Calu3 (cell line): ENCODE measurements at regions of chr9 and their contacts with region 1.

Region 1: GRCh38 chr9:98074115-98074990 is 17.8 kb downstream of the NANS start:
- DNase-seq: peak; percentile 74
- H3K4me3 Mint-ChIP-seq: no peak overlapping the region
- H3K27ac Mint-ChIP-seq: peak overlapping the region; percentile 24
- H3K4me1 Mint-ChIP-seq: peaks cover 24% of the 10 kb centered on the region
- H3K27me3 Mint-ChIP-seq: no peaks in the 10 kb centered on the region
- CTCF ChIP-seq: peak; percentile 82

Region 2: DNA sequence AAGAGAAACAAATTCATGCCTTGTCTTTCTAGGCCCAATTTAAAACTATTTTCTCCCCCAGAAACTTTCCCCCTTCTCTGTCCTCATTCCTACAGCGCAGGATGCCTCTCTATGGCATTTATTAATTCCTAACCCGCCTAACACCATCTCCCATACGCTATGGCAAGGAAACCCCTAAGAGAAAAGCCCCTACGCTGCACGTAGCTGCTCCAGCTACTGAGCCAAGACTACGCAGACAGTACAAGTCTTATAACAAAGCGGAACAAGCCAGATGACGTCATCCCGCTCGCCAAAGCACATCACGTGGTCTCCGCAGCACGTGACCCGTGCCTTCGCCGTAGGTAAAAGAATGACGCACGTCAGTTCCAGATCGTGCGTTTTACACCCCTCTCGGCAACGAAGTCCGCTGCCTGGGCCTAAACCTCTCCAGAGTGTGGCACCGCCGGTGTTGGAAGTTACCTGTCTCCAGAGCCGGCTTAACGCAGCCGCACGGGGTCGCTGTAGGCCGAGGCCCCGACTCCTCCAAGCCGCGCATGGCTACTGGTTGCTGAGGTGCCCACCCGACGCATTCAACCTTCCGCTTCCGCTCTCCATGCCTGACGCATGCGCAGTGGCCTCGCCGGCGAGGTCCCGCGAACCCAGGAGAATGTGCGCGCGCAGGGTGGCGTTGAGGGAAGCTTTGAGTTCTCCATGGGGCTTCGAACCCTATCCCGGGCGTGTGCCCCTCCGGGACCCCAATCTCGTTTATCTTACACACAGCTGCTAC is 152.2 kb before region 1 on chr9 and contains the start of gene TRMO:
- CTCF ChIA-PET with region 1: no interaction called
- intact Hi-C with region 1: loop called (anchors 2 kb)
- DNase-seq: peak; percentile 91
- H3K4me3 Mint-ChIP-seq: peak within 1 kb of the TSS; percentile 88
- H3K27ac Mint-ChIP-seq: peak within 1 kb of the TSS; percentile 99
- H3K4me1 Mint-ChIP-seq: peaks cover 19% of the 10 kb centered on the region
- H3K27me3 Mint-ChIP-seq: no peaks in the 10 kb centered on the region
- CTCF ChIP-seq: peak; percentile 33
- total RNA-seq, gene TRMO: 4.8 and 5.0 TPM in 2 replicates

Region 3: DNA sequence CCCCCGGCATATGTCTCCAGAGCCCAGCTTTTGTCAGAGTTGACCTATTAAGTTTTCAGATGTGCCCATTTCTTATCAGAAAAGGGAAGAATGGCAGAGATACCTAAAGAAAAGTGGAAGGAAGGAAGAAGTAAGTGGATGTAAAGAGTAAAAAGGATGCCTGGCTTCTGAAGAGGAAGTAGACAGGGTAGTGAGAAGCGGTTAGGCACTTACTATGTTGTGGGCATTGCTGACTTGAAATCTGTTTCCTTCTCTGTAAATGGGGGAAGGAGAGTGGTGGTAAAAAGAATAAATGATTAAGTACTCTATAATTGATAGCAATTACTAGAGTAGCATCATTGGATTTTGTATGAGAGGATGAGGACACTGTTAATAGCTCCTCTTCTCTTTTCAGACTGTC is 81.4 kb before region 1 on chr9:
- CTCF ChIA-PET with region 1: no interaction called
- intact Hi-C with region 1: no loop called
- DNase-seq: no peak
- H3K4me3 Mint-ChIP-seq: no peak overlapping the region
- H3K27ac Mint-ChIP-seq: no peak overlapping the region
- H3K4me1 Mint-ChIP-seq: peaks cover 30% of the 10 kb centered on the region
- H3K27me3 Mint-ChIP-seq: no peaks in the 10 kb centered on the region
- CTCF ChIP-seq: no peak

Region 4: GRCh38 chr9:98087420-98088354 is 13.3 kb after region 1 on chr9:
- CTCF ChIA-PET with region 1: no interaction called
- intact Hi-C with region 1: no loop called
- DNase-seq: no peak
- H3K4me3 Mint-ChIP-seq: no peak overlapping the region
- H3K27ac Mint-ChIP-seq: no peak overlapping the region
- H3K4me1 Mint-ChIP-seq: peaks cover 11% of the 10 kb centered on the region
- H3K27me3 Mint-ChIP-seq: no peaks in the 10 kb centered on the region
- CTCF ChIP-seq: no peak

Region 5: DNA sequence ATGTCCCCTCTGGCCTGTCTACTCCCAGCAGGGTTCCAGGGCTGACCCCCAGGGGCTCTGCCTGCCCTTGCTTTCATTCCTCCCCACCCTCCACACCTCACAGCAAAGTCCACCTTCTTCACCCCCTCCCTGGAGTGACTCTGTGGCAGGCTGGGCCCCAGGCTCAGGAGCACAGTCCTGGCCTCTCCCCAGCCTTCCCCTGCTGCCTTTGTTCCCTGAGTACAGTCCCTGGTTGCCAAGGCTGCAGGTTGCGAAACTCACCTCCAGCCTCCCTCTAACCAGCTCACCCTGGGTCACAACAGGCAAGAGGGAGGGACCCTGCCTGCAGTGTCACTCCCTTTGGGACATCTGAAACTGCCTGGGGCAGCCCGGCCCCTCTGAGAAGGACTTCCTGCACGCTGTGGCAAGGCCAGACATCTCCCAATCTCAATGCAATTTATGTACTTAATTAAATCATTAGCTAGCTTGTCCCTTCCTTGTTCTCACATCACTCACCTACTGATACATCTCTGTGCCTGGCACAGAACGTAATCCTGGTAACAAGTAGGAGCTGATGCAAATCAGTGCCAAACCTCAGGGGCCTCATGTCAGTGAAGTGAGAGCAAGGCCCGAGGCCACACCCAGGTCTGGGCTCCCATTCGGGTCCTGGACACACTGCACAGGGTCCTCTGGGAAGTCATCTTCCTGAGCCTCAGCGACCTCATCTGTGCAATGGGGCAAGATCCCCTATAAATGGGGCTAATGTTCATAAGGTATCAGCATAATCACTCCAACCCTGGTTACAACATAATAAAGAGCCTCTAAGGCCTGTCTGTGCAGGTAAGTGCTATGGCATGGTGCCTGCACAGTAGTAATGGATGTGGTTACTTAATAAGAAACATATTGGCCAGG is 72.0 kb after region 1 on chr9:
- CTCF ChIA-PET with region 1: interaction called, 3 read pairs
- intact Hi-C with region 1: loop called (anchors 5 kb)
- DNase-seq: peak; percentile 91
- H3K4me3 Mint-ChIP-seq: peak overlapping the region; percentile 34
- H3K27ac Mint-ChIP-seq: peak overlapping the region; percentile 94
- H3K4me1 Mint-ChIP-seq: peaks cover 67% of the 10 kb centered on the region
- H3K27me3 Mint-ChIP-seq: no peaks in the 10 kb centered on the region
- CTCF ChIP-seq: no peak

Region 6: DNA sequence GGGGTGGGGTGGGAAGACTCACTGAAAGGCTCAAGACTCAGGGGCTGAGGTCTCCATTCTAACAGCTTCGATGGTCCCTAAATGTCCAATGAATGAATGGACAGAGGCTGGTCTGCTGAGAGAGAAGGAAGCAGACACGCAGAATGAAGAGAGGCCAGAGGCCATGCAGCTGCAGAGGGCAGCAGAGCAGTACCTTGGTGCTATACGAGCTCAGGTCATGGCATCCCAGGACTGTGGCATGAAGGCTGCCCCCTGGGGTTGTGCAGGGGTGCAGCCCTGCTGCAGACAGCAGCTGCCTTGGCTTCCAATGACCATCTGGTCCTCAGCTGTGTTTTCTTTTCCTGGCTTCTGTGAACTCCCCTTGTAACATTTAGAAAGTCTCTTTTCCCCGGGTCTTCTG is 133.3 kb after region 1 on chr9:
- CTCF ChIA-PET with region 1: no interaction called
- intact Hi-C with region 1: loop called (anchors 10 kb)
- DNase-seq: no peak
- H3K4me3 Mint-ChIP-seq: no peak overlapping the region
- H3K27ac Mint-ChIP-seq: no peak overlapping the region
- H3K4me1 Mint-ChIP-seq: no peaks in the 10 kb centered on the region
- H3K27me3 Mint-ChIP-seq: no peaks in the 10 kb centered on the region
- CTCF ChIP-seq: no peak

Region 7: GRCh38 chr9:98263482-98264357 is 189.4 kb after region 1 on chr9:
- CTCF ChIA-PET with region 1: no interaction called
- intact Hi-C with region 1: loop called (anchors 1 kb)
- DNase-seq: peak; percentile 75
- H3K4me3 Mint-ChIP-seq: no peak overlapping the region
- H3K27ac Mint-ChIP-seq: no peak overlapping the region
- H3K4me1 Mint-ChIP-seq: no peaks in the 10 kb centered on the region
- H3K27me3 Mint-ChIP-seq: peaks cover 21% of the 10 kb centered on the region
- CTCF ChIP-seq: peak; percentile 80